ENCODE measurements at regions of chr9 and their contacts with region 1.

Region 1: GRCh38 chr9:128689820-128690692 is 1.0 kb downstream of the SET start:
- DNase-seq: peak in 1 of 2 experiments; percentile 71
- H3K4me3 ChIP-seq: peak overlapping the region; percentile 64
- H3K4me1 ChIP-seq: peaks cover 23% of the 10 kb centered on the region
- H3K27me3 ChIP-seq: no peaks in the 10 kb centered on the region

Region 2: GRCh38 chr9:128271108-128271507 is 418.9 kb before region 1 on chr9:
- in situ Hi-C with region 1: no loop called
- DNase-seq: no peak
- H3K4me3 ChIP-seq: no peak overlapping the region
- H3K4me1 ChIP-seq: no peaks in the 10 kb centered on the region
- H3K27me3 ChIP-seq: no peaks in the 10 kb centered on the region

Region 3: GRCh38 chr9:128635283-128636023 is 54.6 kb before region 1 on chr9:
- in situ Hi-C with region 1: loop called (anchors 5 kb)
- DNase-seq: peak; percentile 78 to 92
- H3K4me3 ChIP-seq: no peak overlapping the region
- H3K4me1 ChIP-seq: peaks cover 8% of the 10 kb centered on the region
- H3K27me3 ChIP-seq: no peaks in the 10 kb centered on the region

Measured in HAP-1 (cell line).